ENCODE measurements at regions of chr11 and their contacts with region 1.

Region 1: GRCh38 chr11:64652586-64653387 is 61.8 kb downstream of the SLC22A12 start:
- DNase-seq: no peak
- ATAC-seq: peak; percentile 82
- H3K4me3 ChIP-seq: no peak overlapping the region
- H3K27ac ChIP-seq: no peak overlapping the region
- H3K4me1 ChIP-seq: peaks cover 9% of the 10 kb centered on the region
- H3K27me3 ChIP-seq: peaks cover 0 to 4% of the 10 kb centered on the region in 2 experiments; a peak in 1 of 4 replicates
- CTCF ChIP-seq: peak; percentile 78 to 92 (median 89)
- EP300 ChIP-seq: no peak
- POLR2A ChIP-seq: no peak
- RAD21 ChIP-seq: peak; percentile 82

Region 2: GRCh38 chr11:64489831-64490441 is 162.9 kb before region 1 on chr11:
- CTCF ChIA-PET with region 1: interaction called, 45 read pairs
- POLR2A ChIA-PET with region 1: no interaction called
- RAD21 ChIA-PET with region 1: interaction called, 5 read pairs
- SMC1A ChIA-PET with region 1: interaction called, 3 read pairs
- in situ Hi-C with region 1: no loop called
- intact Hi-C with region 1: loop called (anchors 5 kb)
- DNase-seq: no peak
- ATAC-seq: peak; percentile 79
- H3K4me3 ChIP-seq: no peak overlapping the region
- H3K27ac ChIP-seq: no peak overlapping the region
- H3K4me1 ChIP-seq: peaks cover 3% of the 10 kb centered on the region; the same call in 1 of the 2 replicates
- H3K27me3 ChIP-seq: peaks cover 0 to 7% of the 10 kb centered on the region in 2 experiments; a peak in 3 of 4 replicates
- CTCF ChIP-seq: peak; percentile 55 to 74 (median 61)
- EP300 ChIP-seq: no peak
- POLR2A ChIP-seq: no peak
- RAD21 ChIP-seq: peak; percentile 36

Region 3: GRCh38 chr11:64638018-64638665 is 14.6 kb before region 1 on chr11:
- CTCF ChIA-PET with region 1: interaction called, 22 read pairs
- POLR2A ChIA-PET with region 1: no interaction called
- RAD21 ChIA-PET with region 1: interaction called, 4 read pairs
- SMC1A ChIA-PET with region 1: interaction called, 3 read pairs
- in situ Hi-C with region 1: no loop called
- intact Hi-C with region 1: no loop called
- DNase-seq: no peak
- ATAC-seq: peak; percentile 81
- H3K4me3 ChIP-seq: no peak overlapping the region
- H3K27ac ChIP-seq: no peak overlapping the region
- H3K4me1 ChIP-seq: no peaks in the 10 kb centered on the region
- H3K27me3 ChIP-seq: peaks cover 7 to 8% of the 10 kb centered on the region in 2 experiments; a peak in 3 of 4 replicates
- CTCF ChIP-seq: no peak
- EP300 ChIP-seq: no peak
- POLR2A ChIP-seq: no peak
- RAD21 ChIP-seq: no peak

Region 4: GRCh38 chr11:64688534-64688982 is 35.8 kb after region 1 on chr11:
- CTCF ChIA-PET with region 1: interaction called, 128 read pairs
- POLR2A ChIA-PET with region 1: interaction called, 3 read pairs
- RAD21 ChIA-PET with region 1: interaction called, 45 read pairs
- SMC1A ChIA-PET with region 1: interaction called, 34 read pairs
- in situ Hi-C with region 1: no loop called
- intact Hi-C with region 1: loop called (anchors 1 kb)
- DNase-seq: peak; percentile 46
- ATAC-seq: peak; percentile 99
- H3K4me3 ChIP-seq: no peak overlapping the region; the same call in 1 of the 2 replicates
- H3K27ac ChIP-seq: no peak overlapping the region
- H3K4me1 ChIP-seq: 0 out of 2 replicates have a peak, but pooled peaks cover 3% of the 10 kb centered on the region
- H3K27me3 ChIP-seq: no peaks in the 10 kb centered on the region; a peak in 1 of 4 replicates
- CTCF ChIP-seq: peak; percentile 83 to 92 (median 92)
- EP300 ChIP-seq: no peak
- POLR2A ChIP-seq: no peak
- RAD21 ChIP-seq: peak; percentile 69

Region 5: GRCh38 chr11:64723117-64723906 is 70.5 kb after region 1 on chr11 and contains the start of gene NRXN2:
- CTCF ChIA-PET with region 1: interaction called, 3 read pairs
- POLR2A ChIA-PET with region 1: no interaction called
- RAD21 ChIA-PET with region 1: interaction called, 3 read pairs
- SMC1A ChIA-PET with region 1: no interaction called
- in situ Hi-C with region 1: no loop called
- intact Hi-C with region 1: loop called (anchors 2 kb)
- DNase-seq: peak; percentile 48
- ATAC-seq: peak; percentile 99
- H3K4me3 ChIP-seq: peak within 1 kb of the TSS; percentile 97
- H3K27ac ChIP-seq: peak within 1 kb of the TSS; percentile 18
- H3K4me1 ChIP-seq: peaks cover 10% of the 10 kb centered on the region
- H3K27me3 ChIP-seq: peaks cover 3 to 9% of the 10 kb centered on the region in 2 experiments; a peak in 2 of 4 replicates
- CTCF ChIP-seq: peak; percentile 90 to 99 (median 95)
- EP300 ChIP-seq: no peak
- POLR2A ChIP-seq: peak; percentile 35
- RAD21 ChIP-seq: peak; percentile 60
- polyA plus RNA-seq, gene NRXN2: 0.03 to 0.07 TPM

Region 6: GRCh38 chr11:64742889-64743590 is 90.3 kb after region 1 on chr11:
- CTCF ChIA-PET with region 1: interaction called, 12 read pairs
- POLR2A ChIA-PET with region 1: no interaction called
- RAD21 ChIA-PET with region 1: interaction called, 5 read pairs
- SMC1A ChIA-PET with region 1: no interaction called
- in situ Hi-C with region 1: no loop called
- intact Hi-C with region 1: no loop called
- DNase-seq: no peak
- ATAC-seq: peak; percentile 70
- H3K4me3 ChIP-seq: peak overlapping the region; percentile 35
- H3K27ac ChIP-seq: no peak overlapping the region
- H3K4me1 ChIP-seq: peaks cover 29% of the 10 kb centered on the region
- H3K27me3 ChIP-seq: peaks cover 0 to 5% of the 10 kb centered on the region in 2 experiments; a peak in 3 of 4 replicates
- CTCF ChIP-seq: peak; percentile 69 to 93 (median 81)
- EP300 ChIP-seq: no peak
- POLR2A ChIP-seq: no peak
- RAD21 ChIP-seq: peak; percentile 62